PC-9 (cell line): ENCODE measurements at regions of chr19 and their contacts with region 1.

Region 1: DNA sequence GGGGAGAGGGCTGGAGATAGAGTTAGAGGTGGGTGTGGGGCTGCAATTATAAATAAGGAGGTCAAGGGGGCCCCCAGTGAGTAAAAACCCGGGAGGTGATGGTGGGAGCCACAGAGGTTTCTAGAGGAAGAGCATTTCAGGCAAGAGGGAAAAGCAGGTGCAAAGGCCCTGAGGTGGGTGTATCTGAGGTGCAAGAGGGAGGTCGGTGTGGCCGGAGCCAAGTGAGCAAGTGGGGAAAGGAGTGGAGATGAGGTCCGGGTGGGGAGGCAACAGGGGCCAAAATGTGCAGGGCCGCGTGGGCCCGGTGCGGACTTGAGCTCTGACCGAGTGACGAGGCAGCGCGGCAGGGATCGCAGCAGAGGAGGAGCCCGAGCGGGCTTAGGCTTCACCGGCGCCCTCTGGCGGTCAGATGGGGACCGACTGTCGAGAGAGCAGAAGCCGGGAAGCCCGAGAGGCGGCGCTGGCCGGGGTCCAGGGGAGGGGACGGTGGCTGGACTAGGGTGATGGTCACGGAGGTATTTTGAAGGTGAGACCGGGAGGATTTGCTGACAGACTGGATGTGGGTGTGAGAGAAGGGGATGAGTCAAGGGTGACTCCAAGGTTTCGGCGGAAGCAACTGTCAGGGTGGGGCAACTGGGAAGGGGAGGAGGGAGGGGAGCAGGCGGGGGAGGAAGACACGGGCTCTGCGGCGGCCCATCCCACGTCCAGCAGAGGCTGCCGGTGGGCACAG is 17.7 kb upstream of the SPACA4 start:
- DNase-seq: peak; percentile 93 to 96
- H3K4me3 ChIP-seq: peak overlapping the region; percentile 43; the same call in 1 of the 2 replicates
- H3K27ac ChIP-seq: peak overlapping the region; percentile 73
- H3K4me1 ChIP-seq: peaks cover 14% of the 10 kb centered on the region
- H3K27me3 ChIP-seq: no peaks in the 10 kb centered on the region
- CTCF ChIP-seq: peak; percentile 94

Region 2: GRCh38 chr19:48351341-48351752 is 237.5 kb before region 1 on chr19:
- CTCF ChIA-PET with region 1: interaction called, 13 read pairs
- POLR2A ChIA-PET with region 1: no interaction called
- intact Hi-C with region 1: no loop called
- DNase-seq: peak in 1 of 2 experiments; percentile 70
- H3K4me3 ChIP-seq: no peak overlapping the region
- H3K27ac ChIP-seq: no peak overlapping the region
- H3K4me1 ChIP-seq: peaks cover 27% of the 10 kb centered on the region
- H3K27me3 ChIP-seq: no peaks in the 10 kb centered on the region
- CTCF ChIP-seq: peak; percentile 92

Region 3: GRCh38 chr19:48487996-48488395 is 100.8 kb before region 1 on chr19:
- CTCF ChIA-PET with region 1: interaction called, 17 read pairs
- POLR2A ChIA-PET with region 1: interaction called, 7 read pairs
- intact Hi-C with region 1: loop called (anchors 1 kb)
- DNase-seq: peak; percentile 97
- H3K4me3 ChIP-seq: peak overlapping the region; percentile 25; the same call in 1 of the 2 replicates
- H3K27ac ChIP-seq: peak overlapping the region; percentile 88
- H3K4me1 ChIP-seq: peaks cover 51% of the 10 kb centered on the region
- H3K27me3 ChIP-seq: no peaks in the 10 kb centered on the region
- CTCF ChIP-seq: no peak

Region 4: GRCh38 chr19:48501496-48502350 is 87.1 kb before region 1 on chr19:
- CTCF ChIA-PET with region 1: interaction called, 87 read pairs
- POLR2A ChIA-PET with region 1: no interaction called
- intact Hi-C with region 1: loop called (anchors 1 kb)
- DNase-seq: peak; percentile 96 to 99
- H3K4me3 ChIP-seq: peak overlapping the region; percentile 95
- H3K27ac ChIP-seq: peak overlapping the region; percentile 65
- H3K4me1 ChIP-seq: peaks cover 16% of the 10 kb centered on the region; the same call in 1 of the 2 replicates
- H3K27me3 ChIP-seq: no peaks in the 10 kb centered on the region
- CTCF ChIP-seq: no peak

Region 5: GRCh38 chr19:48553676-48554386 is 35.0 kb before region 1 on chr19:
- CTCF ChIA-PET with region 1: interaction called, 4 read pairs
- POLR2A ChIA-PET with region 1: no interaction called
- intact Hi-C with region 1: loop called (anchors 1 kb)
- DNase-seq: peak; percentile 85 to 89
- H3K4me3 ChIP-seq: peak overlapping the region; percentile 5; the same call in 1 of the 2 replicates
- H3K27ac ChIP-seq: peak overlapping the region; percentile 49
- H3K4me1 ChIP-seq: peaks cover 59% of the 10 kb centered on the region
- H3K27me3 ChIP-seq: no peaks in the 10 kb centered on the region
- CTCF ChIP-seq: no peak

Region 6: GRCh38 chr19:48568345-48568886 is 20.4 kb before region 1 on chr19:
- CTCF ChIA-PET with region 1: interaction called, 11 read pairs
- POLR2A ChIA-PET with region 1: no interaction called
- intact Hi-C with region 1: no loop called
- DNase-seq: peak; percentile 83
- H3K4me3 ChIP-seq: peak overlapping the region; percentile 32; the same call in 1 of the 2 replicates
- H3K27ac ChIP-seq: peak overlapping the region; percentile 40
- H3K4me1 ChIP-seq: peaks cover 29% of the 10 kb centered on the region
- H3K27me3 ChIP-seq: no peaks in the 10 kb centered on the region
- CTCF ChIP-seq: no peak

Region 7: GRCh38 chr19:48618916-48619691 is 30.3 kb after region 1 on chr19 and contains the starts of genes RPL18 and SPHK2:
- CTCF ChIA-PET with region 1: interaction called, 5 read pairs
- POLR2A ChIA-PET with region 1: interaction called, 11 read pairs
- intact Hi-C with region 1: loop called (anchors 2 kb)
- DNase-seq: peak; percentile 97 to 99
- H3K4me3 ChIP-seq: peak within 1 kb of the TSS; percentile 92
- H3K27ac ChIP-seq: peak within 1 kb of the TSS; percentile 91
- H3K4me1 ChIP-seq: peaks cover 42% of the 10 kb centered on the region
- H3K27me3 ChIP-seq: no peaks in the 10 kb centered on the region
- CTCF ChIP-seq: no peak
- total RNA-seq, gene RPL18: 1,618 and 1,710 TPM in 2 replicates
- total RNA-seq, gene SPHK2: 18.4 and 20.0 TPM in 2 replicates